ENCODE measurements at regions of chr10 and their contacts with region 1.

Region 1: DNA sequence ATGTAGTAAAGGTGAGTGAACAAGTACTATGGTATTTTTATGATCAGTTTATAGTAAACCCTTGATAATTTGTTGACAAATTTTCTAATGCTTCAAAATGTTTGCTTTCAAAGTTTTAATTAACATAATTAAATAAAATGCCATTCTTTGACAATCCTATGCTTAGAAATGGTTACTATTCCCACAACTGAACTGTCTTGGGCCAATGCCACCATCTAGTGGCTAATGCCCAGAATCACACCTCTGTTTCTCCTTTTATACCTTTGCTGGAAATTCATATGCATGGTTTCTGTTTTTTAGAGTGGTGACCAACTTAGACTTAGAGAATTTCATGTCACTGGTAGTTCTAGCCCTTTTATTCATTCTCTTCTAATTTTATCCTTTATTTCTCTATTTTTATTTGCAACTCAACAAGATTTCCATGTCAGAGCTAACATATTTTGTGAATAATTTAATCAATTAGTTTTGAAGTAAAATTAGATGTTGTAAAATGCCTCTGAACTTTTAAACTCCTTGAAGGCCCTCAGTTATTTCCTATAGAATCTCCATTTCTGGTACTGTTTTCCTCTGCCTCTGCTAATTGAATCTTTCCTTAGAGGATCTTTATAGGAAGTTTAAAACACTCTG is 31.1 kb downstream of the PCGF5 start:
- DNase-seq: peak; percentile 65
- H3K4me3 Mint-ChIP-seq: no peak overlapping the region
- H3K27ac Mint-ChIP-seq: no peak overlapping the region
- H3K4me1 Mint-ChIP-seq: peaks cover 10% of the 10 kb centered on the region
- H3K27me3 Mint-ChIP-seq: no peaks in the 10 kb centered on the region

Region 2: GRCh38 chr10:91006001-91006751 is 245.4 kb before region 1 on chr10:
- CTCF ChIA-PET with region 1: interaction called, 14 read pairs
- POLR2A ChIA-PET with region 1: interaction called, 5 read pairs
- DNase-seq: peak; percentile 72
- H3K4me3 Mint-ChIP-seq: peak overlapping the region; percentile 50
- H3K27ac Mint-ChIP-seq: peak overlapping the region; percentile 83
- H3K4me1 Mint-ChIP-seq: peaks cover 37% of the 10 kb centered on the region
- H3K27me3 Mint-ChIP-seq: peaks cover 5% of the 10 kb centered on the region

Region 3: GRCh38 chr10:91088300-91089140 is 163.0 kb before region 1 on chr10:
- CTCF ChIA-PET with region 1: interaction called, 10 read pairs
- POLR2A ChIA-PET with region 1: no interaction called
- DNase-seq: no peak
- H3K4me3 Mint-ChIP-seq: no peak overlapping the region
- H3K27ac Mint-ChIP-seq: no peak overlapping the region
- H3K4me1 Mint-ChIP-seq: peaks cover 1% of the 10 kb centered on the region
- H3K27me3 Mint-ChIP-seq: peaks cover 1% of the 10 kb centered on the region

Region 4: GRCh38 chr10:91127341-91128082 is 124.0 kb before region 1 on chr10:
- CTCF ChIA-PET with region 1: no interaction called
- POLR2A ChIA-PET with region 1: no interaction called
- DNase-seq: no peak
- H3K4me3 Mint-ChIP-seq: no peak overlapping the region
- H3K27ac Mint-ChIP-seq: no peak overlapping the region
- H3K4me1 Mint-ChIP-seq: peaks cover 5% of the 10 kb centered on the region
- H3K27me3 Mint-ChIP-seq: peaks cover 4% of the 10 kb centered on the region

Region 5: DNA sequence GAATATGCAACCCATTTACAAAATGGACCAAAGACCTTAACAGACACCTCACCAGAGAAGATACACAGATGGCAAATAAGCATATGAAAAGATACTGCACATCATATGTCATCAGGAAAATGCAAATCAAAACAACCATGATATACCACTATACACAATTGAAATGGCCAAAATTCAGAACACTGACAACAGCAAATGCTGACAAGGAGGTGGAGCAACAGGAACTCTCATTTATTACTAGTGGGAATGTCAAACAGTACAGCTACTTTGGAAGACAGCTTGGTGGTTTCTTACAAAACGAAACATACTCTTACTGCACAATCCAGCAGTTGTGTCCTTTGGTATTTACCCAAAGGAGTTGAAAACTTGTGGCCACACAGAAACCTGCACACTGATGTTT is 81.1 kb before region 1 on chr10:
- CTCF ChIA-PET with region 1: no interaction called
- POLR2A ChIA-PET with region 1: no interaction called
- DNase-seq: no peak
- H3K4me3 Mint-ChIP-seq: no peak overlapping the region
- H3K27ac Mint-ChIP-seq: no peak overlapping the region
- H3K4me1 Mint-ChIP-seq: peaks cover 22% of the 10 kb centered on the region
- H3K27me3 Mint-ChIP-seq: no peaks in the 10 kb centered on the region

Region 6: DNA sequence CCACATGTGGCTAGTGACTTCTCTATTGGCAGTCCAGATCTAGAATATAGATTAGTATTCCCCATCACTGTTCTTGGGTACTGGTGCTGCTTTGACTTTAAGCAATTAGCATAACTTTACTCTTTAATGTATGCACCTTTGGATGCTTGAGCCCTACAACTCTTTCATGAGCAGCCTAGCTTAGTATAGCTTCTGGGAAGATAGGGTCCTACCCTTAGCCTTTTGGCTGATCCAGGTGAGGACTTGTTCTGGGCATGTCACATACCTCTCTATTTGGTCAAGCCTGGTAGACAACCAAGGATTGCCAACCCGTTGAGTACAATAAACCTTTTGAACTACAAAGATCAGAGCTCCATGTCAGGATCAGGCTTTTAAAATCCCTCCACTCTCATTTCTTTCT is 13.4 kb before region 1 on chr10:
- CTCF ChIA-PET with region 1: interaction called, 11 read pairs
- POLR2A ChIA-PET with region 1: no interaction called
- DNase-seq: no peak
- H3K4me3 Mint-ChIP-seq: no peak overlapping the region
- H3K27ac Mint-ChIP-seq: peak overlapping the region; percentile 46
- H3K4me1 Mint-ChIP-seq: peaks cover 20% of the 10 kb centered on the region
- H3K27me3 Mint-ChIP-seq: no peaks in the 10 kb centered on the region